Right ventricle myocardium inferior (tissue), 1 donor: ENCODE measurements at regions of chr4 and their contacts with region 1.

Region 1: GRCh38 chr4:153785910-153786721 is 2.8 kb downstream of the SFRP2 start:
- DNase-seq: no peak
- ATAC-seq: no peak

Region 2: GRCh38 chr4:153585026-153585425 is 201.1 kb before region 1 on chr4:
- intact Hi-C with region 1: no loop called
- DNase-seq: no peak
- ATAC-seq: no peak

Region 3: DNA sequence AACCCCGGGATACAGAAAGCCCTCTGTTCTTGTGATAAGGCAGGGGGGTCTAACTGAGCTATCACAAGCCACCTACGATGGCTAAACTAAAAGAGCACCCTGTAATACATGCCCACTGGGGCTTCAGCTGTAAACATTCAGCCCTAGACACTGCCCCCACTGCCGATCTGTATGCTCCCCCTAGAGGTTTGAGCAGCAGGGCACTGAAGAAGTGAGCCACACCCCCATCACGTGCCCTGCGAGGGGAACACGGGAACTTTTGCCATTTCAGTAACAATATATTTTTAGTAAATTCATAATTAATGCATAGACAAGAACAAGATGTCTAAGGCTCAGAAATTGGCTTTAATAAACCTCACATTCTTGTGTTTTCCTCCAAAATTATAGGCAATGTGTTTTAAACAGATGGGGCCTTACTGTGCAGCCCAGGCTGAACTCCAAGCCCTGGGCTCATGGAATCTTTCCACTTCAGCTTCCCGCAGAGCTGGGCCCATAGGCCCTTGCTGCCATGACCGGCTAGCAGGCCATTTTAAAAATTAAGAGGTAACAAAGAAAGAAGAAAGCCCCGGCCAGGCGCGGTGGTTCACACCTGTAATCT is 238.1 kb after region 1 on chr4:
- intact Hi-C with region 1: loop called (anchors 5 kb)
- DNase-seq: no peak
- ATAC-seq: no peak

Region 4: DNA sequence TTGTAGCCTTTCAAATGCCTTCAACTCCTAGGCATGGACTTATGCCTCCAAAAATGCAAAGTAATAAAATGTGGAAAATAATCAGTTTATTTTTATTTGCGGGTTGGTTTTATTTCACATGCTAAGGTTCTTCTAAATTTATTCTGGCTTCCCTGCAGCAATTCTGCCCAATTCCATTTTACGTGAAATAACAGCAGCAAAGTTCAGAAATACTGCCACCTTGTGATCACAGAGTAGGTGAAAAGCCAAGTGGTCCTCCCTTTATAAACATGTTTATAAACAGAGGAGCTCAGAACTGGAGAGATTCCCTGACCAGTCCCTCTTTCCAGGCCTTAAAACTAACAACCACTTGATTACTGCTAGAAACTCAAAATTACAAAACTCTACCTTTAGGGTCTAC is 720.1 kb after region 1 on chr4:
- intact Hi-C with region 1: loop called (anchors 5 kb)
- DNase-seq: no peak
- ATAC-seq: no peak